Activated CD4-positive, alpha-beta T cell treated with anti-CD3 and anti-CD28 coated beads for 36 hours (primary cell): ENCODE measurements at regions of chr7 and their contacts with region 1.

Region 1: DNA sequence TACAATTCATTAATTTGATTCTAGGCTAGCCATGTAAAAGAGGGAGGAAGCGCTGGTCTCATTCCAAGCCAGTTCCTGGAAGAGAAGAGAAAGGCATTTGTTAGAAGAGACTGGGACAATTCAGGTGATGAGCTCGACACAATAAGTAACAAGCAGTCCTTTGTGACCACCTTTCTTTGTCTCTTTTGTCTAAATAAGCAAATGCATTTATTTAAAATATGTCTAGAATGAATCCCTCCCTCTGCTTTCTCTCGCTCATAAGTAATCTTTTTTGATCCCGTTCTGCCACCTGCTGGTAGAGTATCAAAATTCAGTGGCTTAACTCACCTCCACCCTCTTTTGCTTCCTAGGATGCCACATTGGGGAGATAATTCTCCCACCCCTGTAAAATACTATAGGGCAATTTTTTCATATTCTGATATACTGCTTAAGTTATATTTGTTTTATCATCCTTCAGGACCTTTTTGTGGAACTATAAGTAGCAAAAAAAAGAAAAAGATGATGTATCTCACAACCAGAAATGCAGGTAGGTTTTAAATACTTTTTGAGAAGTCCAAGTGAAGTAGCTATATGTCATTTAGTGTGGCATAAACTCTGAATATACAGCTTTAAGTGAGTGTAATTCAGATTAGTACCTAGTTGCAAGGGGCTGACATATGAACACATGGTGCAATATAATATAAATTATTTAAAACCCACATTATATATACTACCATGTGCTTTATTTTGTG is 91.5 kb downstream of the GSDME start:
- DNase-seq: peak; percentile 61
- ATAC-seq: peak; percentile 47
- H3K4me3 Mint-ChIP-seq: no peak overlapping the region
- H3K27ac Mint-ChIP-seq: no peak overlapping the region
- H3K4me1 Mint-ChIP-seq: peaks cover 3% of the 10 kb centered on the region
- H3K27me3 Mint-ChIP-seq: no peaks in the 10 kb centered on the region

Region 2: DNA sequence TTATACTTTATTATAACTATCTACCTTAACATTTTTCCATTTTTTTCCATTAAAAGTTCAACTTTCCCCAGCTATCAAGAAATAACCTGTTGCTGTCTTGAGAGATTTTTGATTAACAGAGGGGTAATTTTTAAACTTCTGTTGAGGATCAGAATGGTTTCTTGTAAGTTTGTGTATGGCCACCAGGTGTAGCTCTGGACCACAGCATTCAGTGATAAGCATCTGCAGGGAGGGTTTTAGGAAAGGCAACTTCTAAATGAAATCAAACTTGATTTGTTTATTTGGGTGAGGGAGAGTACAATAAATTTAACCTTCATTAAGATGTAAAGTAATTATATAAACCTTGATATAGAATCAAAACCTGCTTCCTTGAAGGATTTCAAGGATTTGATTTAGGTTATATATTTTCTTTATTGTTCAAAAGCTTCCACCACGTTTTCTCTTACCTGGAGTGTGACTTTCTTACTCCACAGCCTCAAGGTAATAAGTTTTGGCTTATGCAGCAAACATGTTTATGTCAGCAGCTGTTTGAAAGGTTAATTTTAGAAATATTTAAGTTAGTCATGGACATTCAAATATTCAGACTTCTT is 802.4 kb before region 1 on chr7:
- CTCF ChIA-PET with region 1: interaction called, 5 read pairs
- POLR2A ChIA-PET with region 1: no interaction called
- intact Hi-C with region 1: loop called in 1 of 2 experiments (anchors 1 kb)
- DNase-seq: peak; percentile 38
- ATAC-seq: peak; percentile 47
- H3K4me3 Mint-ChIP-seq: no peak overlapping the region
- H3K27ac Mint-ChIP-seq: no peak overlapping the region
- H3K4me1 Mint-ChIP-seq: peaks cover 5% of the 10 kb centered on the region
- H3K27me3 Mint-ChIP-seq: peaks cover 9% of the 10 kb centered on the region

Region 3: DNA sequence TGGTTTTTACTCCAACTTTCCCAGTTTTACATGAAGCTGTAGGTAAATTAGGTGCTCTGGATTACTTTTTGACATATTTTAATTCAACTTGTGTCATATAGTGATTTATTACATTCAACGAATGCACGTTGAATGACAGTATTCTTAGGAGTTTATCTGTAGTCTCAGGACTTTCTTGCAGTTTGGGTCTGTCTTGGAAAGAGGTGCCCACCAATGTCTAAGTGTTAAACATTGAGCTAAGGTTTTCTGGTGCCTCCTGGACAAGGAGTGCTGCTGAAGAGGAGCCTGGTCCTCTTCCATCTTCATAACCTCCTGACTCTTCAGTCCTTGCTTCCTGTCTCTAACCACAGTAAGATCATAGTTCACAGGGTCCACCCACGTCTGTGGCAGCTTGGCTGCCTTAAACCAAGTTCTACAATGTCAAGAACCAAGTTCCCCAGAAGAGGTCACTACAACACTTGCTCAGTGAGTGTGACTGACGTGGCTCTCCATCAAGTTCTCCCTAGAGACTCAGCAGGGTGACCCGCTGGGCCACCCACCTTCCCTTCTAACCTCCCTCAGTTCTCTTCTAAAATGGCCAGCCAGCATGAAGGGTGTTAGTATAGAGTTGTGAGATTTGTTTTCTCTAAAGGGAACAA is 375.6 kb before region 1 on chr7:
- CTCF ChIA-PET with region 1: interaction called, 19 read pairs
- POLR2A ChIA-PET with region 1: no interaction called
- intact Hi-C with region 1: loop called (anchors 1 to 2 kb)
- DNase-seq: peak; percentile 81
- ATAC-seq: peak; percentile 99
- H3K4me3 Mint-ChIP-seq: no peak overlapping the region
- H3K27ac Mint-ChIP-seq: no peak overlapping the region
- H3K4me1 Mint-ChIP-seq: peaks cover 10% of the 10 kb centered on the region
- H3K27me3 Mint-ChIP-seq: peaks cover 32% of the 10 kb centered on the region

Region 4: DNA sequence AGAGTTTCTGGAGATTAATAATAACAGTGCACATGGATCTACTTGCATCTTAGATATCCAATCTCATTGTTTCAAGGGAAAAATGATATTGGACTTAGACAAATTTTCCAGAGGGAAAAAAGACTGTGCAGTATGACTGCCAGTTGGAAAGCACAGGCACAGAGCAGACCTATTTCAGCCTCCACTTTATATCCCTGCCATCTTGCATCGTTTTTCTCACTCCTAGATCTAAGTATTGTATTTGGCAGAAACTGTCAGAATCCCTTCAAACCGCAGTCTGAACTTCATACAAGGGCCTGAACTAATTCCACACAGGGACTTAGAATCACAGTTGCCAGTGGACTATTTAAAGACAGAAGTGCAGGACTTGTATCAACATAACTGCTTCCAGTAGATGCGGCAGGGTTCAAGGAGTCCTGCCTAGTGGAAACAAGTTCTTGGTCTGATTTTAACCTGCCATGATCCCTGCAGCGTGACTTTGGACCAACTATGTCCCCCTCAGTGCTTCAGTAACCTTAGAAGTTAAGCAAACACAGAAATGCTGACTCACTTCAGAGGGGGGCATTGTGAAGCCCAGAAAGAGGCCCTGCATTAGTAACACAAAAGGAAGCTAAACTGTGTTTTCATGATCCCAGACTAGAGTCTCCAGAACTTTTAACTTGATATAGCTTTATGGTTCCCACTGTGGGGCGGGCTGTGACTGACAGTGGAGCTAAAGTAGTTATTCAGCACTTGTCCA is 188.2 kb before region 1 on chr7:
- CTCF ChIA-PET with region 1: no interaction called
- POLR2A ChIA-PET with region 1: no interaction called
- intact Hi-C with region 1: loop called in 1 of 2 experiments (anchors 5 kb)
- DNase-seq: no peak
- ATAC-seq: no peak
- H3K4me3 Mint-ChIP-seq: no peak overlapping the region
- H3K27ac Mint-ChIP-seq: no peak overlapping the region
- H3K4me1 Mint-ChIP-seq: no peaks in the 10 kb centered on the region
- H3K27me3 Mint-ChIP-seq: peaks cover 13% of the 10 kb centered on the region

Region 5: DNA sequence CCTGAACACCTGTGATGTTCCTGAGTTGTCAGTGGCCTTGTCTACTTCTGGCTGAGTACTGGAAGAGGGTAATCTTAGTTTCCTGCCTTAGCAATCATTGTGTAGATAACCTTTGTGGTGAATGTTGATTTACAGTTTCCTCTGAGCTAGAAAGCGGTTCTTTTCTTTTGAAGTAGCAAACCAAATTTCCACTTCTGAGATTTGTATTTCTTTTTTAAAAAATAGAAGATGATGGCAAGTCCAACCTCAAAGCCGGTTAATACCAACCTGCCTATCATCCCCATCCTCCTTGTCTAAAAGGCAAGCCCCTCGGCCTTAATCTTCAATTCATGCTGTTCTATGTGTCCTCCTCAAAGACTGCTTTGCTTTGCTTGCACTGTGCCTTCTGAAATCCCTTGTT is 105.0 kb before region 1 on chr7:
- CTCF ChIA-PET with region 1: no interaction called
- POLR2A ChIA-PET with region 1: no interaction called
- intact Hi-C with region 1: no loop called
- DNase-seq: no peak
- ATAC-seq: peak; percentile 79
- H3K4me3 Mint-ChIP-seq: no peak overlapping the region
- H3K27ac Mint-ChIP-seq: peak overlapping the region; percentile 40
- H3K4me1 Mint-ChIP-seq: peaks cover 18% of the 10 kb centered on the region
- H3K27me3 Mint-ChIP-seq: no peaks in the 10 kb centered on the region

Region 6: DNA sequence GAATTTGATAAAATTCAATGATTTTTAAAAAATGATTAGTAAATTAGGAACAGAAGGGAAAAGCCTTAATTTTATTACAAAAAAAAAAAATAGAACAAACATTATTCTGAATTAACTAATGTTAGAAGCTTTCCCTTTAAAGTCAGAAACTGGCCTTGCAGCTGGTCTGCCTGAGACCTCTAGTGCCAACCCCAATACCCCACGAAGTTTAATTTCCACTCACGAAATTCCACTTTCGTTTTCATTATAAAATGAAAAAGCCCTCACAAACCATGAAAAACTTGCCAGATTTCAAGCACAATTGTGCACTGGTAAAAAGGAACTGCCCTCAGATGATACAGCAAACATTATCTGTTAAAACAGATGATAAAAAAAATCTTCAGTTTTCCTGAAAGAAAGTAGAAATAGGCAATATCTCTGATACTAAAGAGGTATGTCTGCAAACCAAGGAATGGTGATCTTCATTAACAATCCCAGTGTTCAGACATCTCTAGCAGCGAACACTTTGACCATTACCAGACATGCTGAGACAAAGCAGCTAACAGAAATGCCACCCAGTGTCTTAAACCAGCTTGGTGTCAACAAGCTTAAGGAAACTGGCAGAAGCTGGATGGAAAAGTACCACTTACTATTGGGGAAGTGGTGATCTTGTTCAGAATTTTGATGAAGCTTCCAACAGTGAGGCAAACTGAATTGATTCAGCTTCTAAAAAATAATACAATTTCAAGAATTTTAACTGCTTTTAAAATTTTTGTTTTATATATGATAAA is 12.2 kb before region 1 on chr7:
- CTCF ChIA-PET with region 1: interaction called, 18 read pairs
- POLR2A ChIA-PET with region 1: no interaction called
- intact Hi-C with region 1: no loop called
- DNase-seq: no peak
- ATAC-seq: no peak
- H3K4me3 Mint-ChIP-seq: peak overlapping the region; percentile 12
- H3K27ac Mint-ChIP-seq: no peak overlapping the region
- H3K4me1 Mint-ChIP-seq: peaks cover 9% of the 10 kb centered on the region
- H3K27me3 Mint-ChIP-seq: no peaks in the 10 kb centered on the region

Region 7: GRCh38 chr7:24778543-24779282 is 113.0 kb after region 1 on chr7:
- CTCF ChIA-PET with region 1: no interaction called
- POLR2A ChIA-PET with region 1: no interaction called
- intact Hi-C with region 1: no loop called
- DNase-seq: peak; percentile 45
- ATAC-seq: peak; percentile 85
- H3K4me3 Mint-ChIP-seq: no peak overlapping the region
- H3K27ac Mint-ChIP-seq: peak overlapping the region; percentile 69
- H3K4me1 Mint-ChIP-seq: peaks cover 10% of the 10 kb centered on the region
- H3K27me3 Mint-ChIP-seq: no peaks in the 10 kb centered on the region

Region 8: DNA sequence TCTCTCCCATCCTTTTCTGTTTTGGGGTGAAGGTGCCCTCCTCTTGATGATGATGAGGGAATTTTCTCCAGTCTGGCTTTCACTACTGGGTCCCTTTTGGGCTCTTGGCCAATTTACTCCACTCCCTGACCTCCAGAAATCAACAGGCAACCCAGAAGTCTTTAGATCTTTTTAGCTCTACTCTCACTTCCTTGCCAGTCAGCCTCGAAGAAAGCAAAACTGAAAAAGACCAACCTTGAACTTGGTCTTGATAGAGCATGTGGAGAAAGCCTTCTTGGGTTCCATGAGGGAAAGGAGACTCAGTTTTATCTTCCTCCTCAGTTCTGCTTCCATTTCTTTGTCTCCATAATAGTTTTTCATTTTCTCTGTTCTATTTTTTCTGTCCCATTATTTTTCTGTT is 654.0 kb after region 1 on chr7:
- CTCF ChIA-PET with region 1: no interaction called
- POLR2A ChIA-PET with region 1: no interaction called
- intact Hi-C with region 1: no loop called
- DNase-seq: no peak
- ATAC-seq: no peak
- H3K4me3 Mint-ChIP-seq: no peak overlapping the region
- H3K27ac Mint-ChIP-seq: no peak overlapping the region
- H3K4me1 Mint-ChIP-seq: peaks cover 2% of the 10 kb centered on the region
- H3K27me3 Mint-ChIP-seq: peaks cover 12% of the 10 kb centered on the region